ENCODE measurements at regions of chr2 and their contacts with region 1.

Region 1: GRCh38 chr2:197191177-197191939 is 119.2 kb downstream of the ANKRD44 start:
- DNase-seq: peak; percentile 74 to 80 (median 75)
- H3K4me3 ChIP-seq: no peak overlapping the region
- H3K27ac ChIP-seq: no peak overlapping the region
- H3K4me1 ChIP-seq: peaks cover 8 to 22% (median 16%) of the 10 kb centered on the region in 4 experiments
- H3K27me3 ChIP-seq: no peaks in the 10 kb centered on the region

Region 2: GRCh38 chr2:196535742-196536141 is 655.6 kb before region 1 on chr2:
- CTCF ChIA-PET with region 1: no interaction called
- POLR2A ChIA-PET with region 1: no interaction called
- DNase-seq: peak in 2 of 3 donors; percentile 9 to 14
- H3K4me3 ChIP-seq: no peak overlapping the region
- H3K27ac ChIP-seq: no peak overlapping the region
- H3K4me1 ChIP-seq: no peaks in the 10 kb centered on the region
- H3K27me3 ChIP-seq: peaks cover 0 to 6% (median 2%) of the 10 kb centered on the region in 5 experiments

Region 3: DNA sequence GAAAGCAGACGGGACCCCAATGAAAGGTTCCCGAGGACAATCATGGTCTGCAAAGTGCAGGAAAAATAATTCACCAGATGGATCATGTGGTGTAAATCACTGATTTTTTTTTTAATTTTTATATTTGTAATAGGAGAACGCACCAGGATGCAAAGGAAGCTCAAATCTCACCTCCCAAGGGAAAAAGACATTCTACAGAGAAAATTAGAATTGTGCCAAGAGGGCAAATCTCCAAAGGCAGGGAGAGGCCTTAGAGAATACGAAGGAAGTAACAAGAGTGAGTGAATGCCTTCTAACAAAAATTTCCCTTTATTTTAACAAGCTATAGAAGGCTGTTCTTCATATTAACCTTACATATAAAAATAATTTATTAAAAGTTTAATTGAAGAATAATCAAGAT is 28.3 kb after region 1 on chr2:
- CTCF ChIA-PET with region 1: no interaction called
- POLR2A ChIA-PET with region 1: no interaction called
- DNase-seq: no peak
- H3K4me3 ChIP-seq: no peak overlapping the region
- H3K27ac ChIP-seq: no peak overlapping the region
- H3K4me1 ChIP-seq: peaks cover 19 to 35% (median 25%) of the 10 kb centered on the region in 4 experiments
- H3K27me3 ChIP-seq: no peaks in the 10 kb centered on the region

Region 4: DNA sequence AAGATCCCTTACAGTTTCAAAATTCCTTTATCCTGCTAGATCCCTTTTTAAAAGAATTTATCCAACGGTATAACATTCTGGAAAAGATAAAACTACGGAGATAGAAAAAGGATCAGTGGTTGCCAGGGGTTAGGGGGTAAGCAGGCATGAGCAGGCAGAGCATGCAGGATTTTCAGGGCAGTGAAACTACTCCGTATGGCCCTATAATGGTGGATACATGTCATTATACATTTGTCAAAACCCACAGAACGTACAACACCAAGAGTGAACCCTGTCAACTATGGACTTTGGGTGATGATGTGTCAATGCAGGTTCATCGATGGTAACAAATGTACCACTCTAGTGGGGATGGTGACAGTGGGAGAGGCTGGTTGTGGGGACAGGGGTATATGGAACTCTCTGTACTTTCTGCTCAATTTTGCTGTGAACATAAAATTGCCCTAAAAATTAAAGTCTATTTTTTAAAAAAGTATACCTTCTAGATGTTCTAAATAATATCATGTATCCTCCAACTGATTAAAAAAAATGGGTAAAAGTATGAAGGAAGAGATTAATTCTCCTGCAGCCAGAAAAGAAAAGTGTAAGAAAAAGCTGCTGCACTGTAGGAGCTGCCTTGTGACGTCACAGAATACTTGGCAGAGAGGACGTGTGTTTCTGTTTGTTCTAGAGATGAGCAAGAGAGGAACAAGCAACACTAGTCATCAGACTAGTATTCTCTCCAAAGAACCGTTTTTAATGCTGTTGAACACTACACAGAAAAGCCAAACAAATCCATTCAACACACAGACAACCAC is 95.6 kb after region 1 on chr2:
- CTCF ChIA-PET with region 1: no interaction called
- POLR2A ChIA-PET with region 1: no interaction called
- DNase-seq: peak in 2 of 3 donors; percentile 67 to 73
- H3K4me3 ChIP-seq: no peak overlapping the region
- H3K27ac ChIP-seq: no peak overlapping the region
- H3K4me1 ChIP-seq: peaks cover 0 to 16% (median 6%) of the 10 kb centered on the region in 4 experiments
- H3K27me3 ChIP-seq: no peaks in the 10 kb centered on the region

Region 5: DNA sequence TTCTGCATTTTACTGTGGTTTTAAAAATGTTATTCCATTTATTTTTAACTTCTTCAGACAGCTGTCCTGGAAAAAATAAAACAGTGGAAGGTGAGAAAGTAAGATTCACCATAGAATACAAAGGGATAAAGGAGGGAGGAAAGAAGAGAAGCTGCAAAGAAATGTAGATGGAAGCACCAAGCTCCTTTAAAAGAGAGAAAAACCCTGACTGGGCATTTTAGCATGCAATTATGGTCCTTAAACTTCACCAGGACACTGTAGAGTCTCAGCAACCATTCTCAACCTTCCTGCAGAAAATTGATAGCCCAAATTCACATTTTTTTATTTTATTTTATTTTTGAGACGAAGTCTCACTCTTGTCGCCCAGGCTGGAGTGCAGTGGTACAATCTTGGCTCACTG is 130.8 kb after region 1 on chr2:
- CTCF ChIA-PET with region 1: interaction called, 4 read pairs
- POLR2A ChIA-PET with region 1: interaction called, 11 read pairs
- DNase-seq: no peak
- H3K4me3 ChIP-seq: no peak overlapping the region
- H3K27ac ChIP-seq: no peak overlapping the region
- H3K4me1 ChIP-seq: peaks cover 10 to 30% (median 25%) of the 10 kb centered on the region in 4 experiments
- H3K27me3 ChIP-seq: no peaks in the 10 kb centered on the region

Region 6: DNA sequence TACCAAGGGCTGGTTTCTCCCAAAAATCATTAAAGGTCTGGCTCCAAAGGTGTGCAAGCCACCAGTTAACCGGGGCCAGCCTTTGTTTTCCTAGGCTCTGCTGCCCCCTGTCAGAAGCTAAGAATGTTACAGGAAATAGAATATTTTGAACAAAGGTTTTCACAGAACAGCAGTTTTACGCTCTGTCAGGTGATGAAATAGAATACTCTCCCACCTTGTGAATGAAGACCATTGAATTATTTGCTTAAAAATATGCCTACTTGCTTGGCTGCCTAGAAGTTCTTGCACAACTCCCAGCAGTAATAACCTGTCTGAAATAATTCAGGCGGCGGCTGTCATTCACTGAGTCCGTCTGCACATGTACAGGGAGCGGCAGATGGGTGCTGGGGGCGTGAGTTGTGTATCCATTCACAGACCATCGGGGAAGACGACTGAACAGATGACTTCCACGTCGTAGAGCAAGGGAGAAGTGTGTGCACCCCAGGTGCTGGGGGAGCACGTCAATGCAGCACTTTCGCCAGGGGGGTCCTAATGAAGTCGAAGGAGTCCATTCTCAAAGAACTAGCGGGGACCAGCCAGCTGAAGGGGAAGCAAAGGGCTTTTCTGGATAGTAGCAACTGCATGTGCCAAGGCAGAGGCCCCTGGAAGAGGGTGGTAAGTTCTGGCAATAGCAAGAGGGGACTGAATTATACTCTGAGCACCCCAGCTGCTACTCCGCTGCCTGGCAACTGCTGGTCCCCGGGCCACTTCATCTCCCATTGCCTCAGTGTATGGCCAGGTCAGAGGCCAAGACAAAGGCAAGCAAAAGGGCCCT is 187.3 kb after region 1 on chr2:
- CTCF ChIA-PET with region 1: interaction called, 23 read pairs
- POLR2A ChIA-PET with region 1: no interaction called
- DNase-seq: peak; percentile 46 to 61 (median 54)
- H3K4me3 ChIP-seq: no peak overlapping the region
- H3K27ac ChIP-seq: no peak overlapping the region
- H3K4me1 ChIP-seq: peaks cover 0 to 2% (median 0%) of the 10 kb centered on the region in 4 experiments
- H3K27me3 ChIP-seq: no peaks in the 10 kb centered on the region

Measured in common myeloid progenitor, CD34-positive (primary cell).